ENCODE measurements at regions of chr6 and their contacts with region 1.

Region 1: GRCh38 chr6:129606664-129607063 is 103.3 kb downstream of the ARHGAP18 start:
- DNase-seq: no peak
- ATAC-seq: no peak
- H3K4me3 ChIP-seq: no peak overlapping the region
- H3K27ac ChIP-seq: no peak overlapping the region
- H3K4me1 ChIP-seq: peaks cover 0 to 4% of the 10 kb centered on the region in 2 donors
- H3K27me3 ChIP-seq: no peaks in the 10 kb centered on the region
- CTCF ChIP-seq: no peak

Region 2: DNA sequence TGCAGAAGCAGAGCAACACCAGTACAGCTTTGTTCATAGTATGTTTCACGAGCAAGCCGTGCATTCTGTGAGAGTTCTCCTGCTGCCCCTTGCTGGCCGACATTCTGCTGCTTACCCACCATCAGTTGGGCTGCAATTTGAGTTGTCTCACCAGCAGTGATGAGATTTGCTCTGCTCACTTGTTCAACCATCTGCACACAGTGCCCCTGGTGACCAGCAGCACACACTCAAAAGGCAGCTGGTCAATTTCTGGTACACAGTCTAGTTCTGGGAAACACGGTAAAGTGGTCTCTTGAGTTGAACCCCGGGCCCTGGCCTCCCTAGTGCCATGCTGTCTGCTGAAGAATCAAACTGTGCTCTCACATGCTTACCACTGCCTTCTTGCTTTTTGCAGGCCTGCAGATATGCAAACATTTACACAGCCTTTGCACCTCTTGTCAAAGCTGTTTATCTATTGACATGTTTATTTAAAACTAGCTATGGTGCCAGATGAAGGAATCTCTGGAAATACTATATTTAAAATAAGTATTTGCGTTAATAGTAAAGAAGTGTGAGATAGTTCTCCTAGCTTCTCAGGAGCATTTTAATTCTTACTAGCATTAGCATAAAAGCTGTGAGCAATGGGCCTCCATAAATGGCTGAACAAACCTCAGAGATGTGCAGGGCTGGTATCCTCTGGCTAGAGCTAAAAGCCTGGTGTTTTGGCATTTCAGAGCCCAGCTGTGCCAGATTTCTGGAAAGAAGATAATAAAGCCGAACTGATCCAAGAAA is 131.0 kb before region 1 on chr6:
- intact Hi-C with region 1: no loop called
- DNase-seq: peak in 1 of 4 donors; percentile 16
- ATAC-seq: no peak
- H3K4me3 ChIP-seq: no peak overlapping the region
- H3K27ac ChIP-seq: no peak overlapping the region
- H3K4me1 ChIP-seq: no peaks in the 10 kb centered on the region
- H3K27me3 ChIP-seq: no peaks in the 10 kb centered on the region
- CTCF ChIP-seq: no peak

Region 3: GRCh38 chr6:129719692-129720091 is 113.0 kb after region 1 on chr6:
- intact Hi-C with region 1: loop called in 1 of 2 experiments (anchors 10 kb)
- DNase-seq: peak in 1 of 4 donors; percentile 49
- ATAC-seq: peak; percentile 39
- H3K4me3 ChIP-seq: no peak overlapping the region
- H3K27ac ChIP-seq: peak overlapping the region in 1 of 2 donors; percentile 7
- H3K4me1 ChIP-seq: no peaks in the 10 kb centered on the region
- H3K27me3 ChIP-seq: no peaks in the 10 kb centered on the region
- CTCF ChIP-seq: no peak